PC-9 (cell line): ENCODE measurements at regions of chr3 and their contacts with region 1.

Region 1: DNA sequence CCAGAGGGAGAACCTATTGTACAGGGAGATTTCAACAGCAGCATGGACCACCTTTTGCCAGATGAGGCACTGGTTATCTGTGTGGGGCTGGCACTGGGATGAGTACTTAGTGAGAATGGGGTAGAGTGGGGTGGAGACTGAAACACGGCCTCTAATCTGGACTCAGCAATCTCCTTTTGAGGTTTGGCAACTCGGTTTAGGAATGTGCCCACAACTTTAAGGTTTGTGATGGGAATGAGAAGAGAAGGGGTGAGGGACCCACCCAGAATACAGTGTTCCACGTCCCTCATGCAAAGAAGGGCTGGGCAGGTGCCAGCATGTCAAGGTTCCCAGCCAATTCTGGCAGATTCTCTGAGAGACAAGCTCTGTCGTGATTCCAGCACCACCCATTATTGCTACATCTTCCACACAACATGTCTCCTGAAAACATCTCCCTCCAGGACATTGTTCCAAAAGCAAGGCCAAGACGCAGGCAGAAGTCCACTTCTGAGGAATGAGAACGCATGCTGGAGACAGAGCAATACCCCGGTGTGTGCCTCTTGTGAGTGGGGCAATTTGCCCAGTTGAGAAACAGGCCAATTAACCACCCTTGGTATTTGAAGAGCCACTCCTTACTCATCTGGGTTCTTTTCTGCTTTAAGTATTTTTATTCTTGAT is 37.5 kb upstream of the CCR4 start:
- DNase-seq: no peak
- H3K4me3 ChIP-seq: no peak overlapping the region
- H3K27ac ChIP-seq: no peak overlapping the region
- H3K4me1 ChIP-seq: no peaks in the 10 kb centered on the region
- H3K27me3 ChIP-seq: no peaks in the 10 kb centered on the region
- CTCF ChIP-seq: no peak

Region 2: DNA sequence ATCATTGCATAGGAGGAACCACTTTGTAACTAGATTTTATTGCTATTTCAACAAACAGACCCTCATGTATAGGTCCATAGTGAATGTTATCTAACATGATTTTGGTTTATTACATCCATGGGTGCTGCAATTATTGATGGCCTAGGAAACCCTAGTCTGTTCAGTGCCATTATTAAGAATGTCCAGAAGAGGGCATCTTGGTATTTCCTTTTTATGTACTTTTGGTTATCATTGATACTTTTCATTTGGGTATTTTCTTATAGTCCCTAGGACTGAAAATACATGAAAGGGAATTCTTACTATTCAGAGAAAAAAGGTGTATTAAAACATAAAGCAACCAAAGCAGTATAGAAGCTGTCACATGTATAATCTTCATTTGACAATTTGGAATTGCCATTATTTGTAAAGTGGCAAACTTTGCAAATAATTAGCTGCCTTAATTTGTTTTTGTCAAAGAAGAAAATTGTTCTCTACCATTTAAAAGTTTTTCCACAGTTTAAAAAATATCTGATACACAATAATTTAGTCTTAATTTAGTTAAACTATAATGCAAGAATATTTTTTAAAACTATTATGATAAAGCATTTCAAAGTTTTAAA is 180.2 kb before region 1 on chr3:
- CTCF ChIA-PET with region 1: no interaction called
- POLR2A ChIA-PET with region 1: no interaction called
- intact Hi-C with region 1: no loop called
- DNase-seq: no peak
- H3K4me3 ChIP-seq: no peak overlapping the region
- H3K27ac ChIP-seq: no peak overlapping the region
- H3K4me1 ChIP-seq: no peaks in the 10 kb centered on the region
- H3K27me3 ChIP-seq: no peaks in the 10 kb centered on the region
- CTCF ChIP-seq: peak; percentile 60

Region 3: DNA sequence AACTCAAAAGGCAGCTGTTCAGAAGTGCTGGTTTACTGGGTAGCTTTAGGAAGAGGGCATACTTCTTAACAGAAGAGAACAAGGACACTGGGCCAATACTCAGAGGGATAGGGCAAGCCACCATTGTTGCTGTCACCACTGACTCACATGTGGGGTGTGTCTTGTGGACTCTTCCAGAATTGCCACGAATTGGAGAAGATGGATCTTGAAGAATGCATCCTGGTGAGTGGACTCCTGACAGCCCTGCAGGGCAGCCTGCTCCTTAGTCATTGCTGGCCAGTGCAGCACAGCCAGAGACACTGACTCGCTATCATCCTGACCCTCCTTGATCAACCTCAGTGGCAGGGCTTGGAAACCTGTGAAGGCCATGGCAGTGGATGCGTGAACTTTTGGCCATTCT is 464.0 kb after region 1 on chr3:
- CTCF ChIA-PET with region 1: interaction called, 13 read pairs
- POLR2A ChIA-PET with region 1: no interaction called
- intact Hi-C with region 1: no loop called
- DNase-seq: no peak
- H3K4me3 ChIP-seq: no peak overlapping the region
- H3K27ac ChIP-seq: no peak overlapping the region
- H3K4me1 ChIP-seq: no peaks in the 10 kb centered on the region
- H3K27me3 ChIP-seq: no peaks in the 10 kb centered on the region
- CTCF ChIP-seq: no peak